ENCODE measurements at regions of chr6 and their contacts with region 1.

Region 1: DNA sequence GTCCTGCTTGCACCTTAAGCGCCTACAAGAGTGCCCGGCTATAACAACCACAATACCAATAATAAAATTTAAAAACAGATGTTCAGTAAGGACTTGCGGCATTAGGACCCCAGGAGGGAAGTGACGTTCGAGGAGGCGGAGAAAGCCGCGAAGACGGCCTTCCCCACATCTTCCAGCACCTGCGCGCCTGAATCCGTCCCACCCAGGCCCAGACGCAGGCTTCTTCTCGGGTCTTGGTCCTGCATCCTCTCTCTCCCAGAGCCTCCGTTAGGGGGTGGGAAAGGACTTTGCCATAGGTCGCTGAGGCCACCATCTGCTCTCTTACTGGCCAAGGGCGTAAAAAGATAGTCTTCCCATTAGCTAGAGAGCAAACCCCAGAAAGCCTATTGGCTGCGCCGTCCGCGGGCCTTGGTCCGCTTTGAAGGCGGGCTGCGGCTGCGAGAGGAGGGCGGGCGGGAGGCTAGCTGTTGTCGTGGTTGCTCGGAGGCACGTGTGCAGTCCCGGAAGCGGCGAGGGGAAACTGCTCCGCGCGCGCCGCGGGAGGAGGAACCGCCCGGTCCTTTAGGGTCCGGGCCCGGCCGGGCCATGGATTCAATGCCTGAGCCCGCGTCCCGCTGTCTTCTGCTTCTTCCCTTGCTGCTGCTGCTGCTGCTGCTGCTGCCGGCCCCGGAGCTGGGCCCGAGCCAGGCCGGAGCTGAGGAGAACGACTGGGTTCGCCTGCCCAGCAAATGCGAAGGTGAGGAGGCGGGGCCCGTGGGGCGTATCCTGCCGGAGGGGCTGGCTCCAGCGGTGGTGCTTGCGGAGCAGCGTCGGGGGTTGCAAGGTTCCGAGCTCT is at the start of gene CNPY3:
- DNase-seq: peak; percentile 94
- ATAC-seq: peak; percentile 86
- H3K4me3 Mint-ChIP-seq: peak within 1 kb of the TSS; percentile 96
- H3K27ac Mint-ChIP-seq: peak within 1 kb of the TSS; percentile 99
- H3K4me1 Mint-ChIP-seq: peaks cover 32% of the 10 kb centered on the region
- H3K27me3 Mint-ChIP-seq: no peaks in the 10 kb centered on the region
- total RNA-seq, gene CNPY3: 90.8 to 91.4 TPM

Region 2: GRCh38 chr6:42841844-42842584 is 87.2 kb before region 1 on chr6:
- POLR2A ChIA-PET with region 1: no interaction called
- DNase-seq: no peak
- ATAC-seq: no peak
- H3K4me3 Mint-ChIP-seq: no peak overlapping the region
- H3K27ac Mint-ChIP-seq: no peak overlapping the region
- H3K4me1 Mint-ChIP-seq: peaks cover 5% of the 10 kb centered on the region
- H3K27me3 Mint-ChIP-seq: no peaks in the 10 kb centered on the region

Region 3: GRCh38 chr6:42890311-42891198 is 38.6 kb before region 1 on chr6:
- POLR2A ChIA-PET with region 1: interaction called, 15 read pairs
- DNase-seq: peak; percentile 88
- ATAC-seq: peak; percentile 94
- H3K4me3 Mint-ChIP-seq: peak overlapping the region; percentile 89
- H3K27ac Mint-ChIP-seq: peak overlapping the region; percentile 97
- H3K4me1 Mint-ChIP-seq: peaks cover 26% of the 10 kb centered on the region
- H3K27me3 Mint-ChIP-seq: no peaks in the 10 kb centered on the region

Region 4: GRCh38 chr6:42978839-42979522 is 49.8 kb after region 1 on chr6 and contains the start of gene PEX6:
- POLR2A ChIA-PET with region 1: interaction called, 66 read pairs
- DNase-seq: peak; percentile 93
- ATAC-seq: peak; percentile 94
- H3K4me3 Mint-ChIP-seq: peak within 1 kb of the TSS; percentile 89
- H3K27ac Mint-ChIP-seq: peak within 1 kb of the TSS; percentile 98
- H3K4me1 Mint-ChIP-seq: peaks cover 34% of the 10 kb centered on the region
- H3K27me3 Mint-ChIP-seq: no peaks in the 10 kb centered on the region
- total RNA-seq, gene PEX6: 27.1 to 27.6 TPM

Region 5: DNA sequence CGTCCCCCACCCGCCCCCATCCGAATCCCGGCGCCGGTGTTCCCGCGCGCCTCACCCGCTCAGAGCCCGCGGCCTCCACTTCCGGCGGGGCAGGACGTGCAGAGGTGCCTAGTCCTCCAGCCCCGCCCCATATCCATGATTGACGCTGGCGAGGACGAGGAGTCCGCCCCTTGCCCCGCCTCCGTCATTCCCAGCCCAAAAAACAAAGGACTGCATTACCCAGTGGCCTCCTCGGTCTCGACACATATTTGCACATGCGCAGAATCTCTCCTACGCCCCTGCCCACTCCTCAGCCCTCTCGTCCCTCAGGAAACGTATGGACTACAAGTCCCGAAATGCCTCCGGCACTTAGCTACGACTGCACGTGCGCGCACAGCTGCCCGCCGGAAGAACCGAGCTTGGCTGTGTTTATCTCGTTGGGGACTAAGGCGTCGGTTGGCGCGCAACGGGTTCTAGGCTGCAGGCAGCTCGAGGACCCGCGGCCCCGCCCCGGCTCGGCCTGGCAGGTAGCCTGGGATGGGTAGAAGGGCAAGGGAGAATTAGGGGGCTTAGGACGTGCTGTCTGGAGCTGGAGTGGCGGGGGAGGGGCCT is 84.7 kb after region 1 on chr6 and contains the starts of genes KLHDC3 and MEA1:
- POLR2A ChIA-PET with region 1: interaction called, 25 read pairs
- DNase-seq: peak; percentile 94
- ATAC-seq: peak; percentile 95
- H3K4me3 Mint-ChIP-seq: peak within 1 kb of the TSS; percentile 93
- H3K27ac Mint-ChIP-seq: peak within 1 kb of the TSS; percentile 92
- H3K4me1 Mint-ChIP-seq: peaks cover 41% of the 10 kb centered on the region
- H3K27me3 Mint-ChIP-seq: no peaks in the 10 kb centered on the region
- total RNA-seq, gene KLHDC3: 69.4 to 69.9 TPM
- total RNA-seq, gene MEA1: 61.2 to 70.1 TPM

Region 6: GRCh38 chr6:43053545-43054205 is 124.5 kb after region 1 on chr6 and contains the start of gene CUL7:
- POLR2A ChIA-PET with region 1: interaction called, 29 read pairs
- DNase-seq: peak; percentile 93
- ATAC-seq: peak; percentile 99
- H3K4me3 Mint-ChIP-seq: peak within 1 kb of the TSS; percentile 99
- H3K27ac Mint-ChIP-seq: peak within 1 kb of the TSS; percentile 99
- H3K4me1 Mint-ChIP-seq: peaks cover 40% of the 10 kb centered on the region
- H3K27me3 Mint-ChIP-seq: no peaks in the 10 kb centered on the region
- total RNA-seq, gene CUL7: 10.2 to 12.7 TPM

Measured in activated naive CD8-positive, alpha-beta T cell treated with anti-CD3 and anti-CD28 coated beads, Interleukin-2, amount 10 ng/mL, durations not matched to agents 7 days and 5 days (primary cell).